ENCODE measurements at regions of chr11 and their contacts with region 1.

Region 1: GRCh38 chr11:57527056-57527631 is 3.4 kb downstream of the TIMM10 start:
- DNase-seq: peak; percentile 69 to 74
- H3K4me3 ChIP-seq: no peak overlapping the region
- H3K27ac ChIP-seq: no peak overlapping the region
- H3K4me1 ChIP-seq: peaks cover 0 to 9% of the 10 kb centered on the region in 2 donors
- H3K27me3 ChIP-seq: no peaks in the 10 kb centered on the region
- CTCF ChIP-seq: peak; percentile 83 to 96 (median 92)
- POLR2A ChIP-seq: no peak

Region 2: GRCh38 chr11:57456960-57457642 is 70.0 kb before region 1 on chr11:
- intact Hi-C with region 1: loop called (anchors 5 kb)
- DNase-seq: peak; percentile 91 to 92
- H3K4me3 ChIP-seq: no peak overlapping the region
- H3K27ac ChIP-seq: no peak overlapping the region
- H3K4me1 ChIP-seq: peaks cover 0 to 26% of the 10 kb centered on the region in 2 donors
- H3K27me3 ChIP-seq: peaks cover 7 to 19% of the 10 kb centered on the region in 2 donors
- CTCF ChIP-seq: peak; percentile 97 to 100 (median 97)
- POLR2A ChIP-seq: no peak

Region 3: GRCh38 chr11:57487920-57488659 is 39.1 kb before region 1 on chr11:
- intact Hi-C with region 1: loop called (anchors 2 kb)
- DNase-seq: no peak
- H3K4me3 ChIP-seq: no peak overlapping the region
- H3K27ac ChIP-seq: no peak overlapping the region
- H3K4me1 ChIP-seq: peaks cover 0 to 3% of the 10 kb centered on the region in 2 donors
- H3K27me3 ChIP-seq: no peaks in the 10 kb centered on the region
- CTCF ChIP-seq: no peak
- POLR2A ChIP-seq: no peak